KBM-7 (cell line): ENCODE measurements at regions of chr17 and their contacts with region 1.

Region 1: GRCh38 chr17:17500997-17501605 is 4.9 kb upstream of the RASD1 start:
- DNase-seq: no peak

Region 2: DNA sequence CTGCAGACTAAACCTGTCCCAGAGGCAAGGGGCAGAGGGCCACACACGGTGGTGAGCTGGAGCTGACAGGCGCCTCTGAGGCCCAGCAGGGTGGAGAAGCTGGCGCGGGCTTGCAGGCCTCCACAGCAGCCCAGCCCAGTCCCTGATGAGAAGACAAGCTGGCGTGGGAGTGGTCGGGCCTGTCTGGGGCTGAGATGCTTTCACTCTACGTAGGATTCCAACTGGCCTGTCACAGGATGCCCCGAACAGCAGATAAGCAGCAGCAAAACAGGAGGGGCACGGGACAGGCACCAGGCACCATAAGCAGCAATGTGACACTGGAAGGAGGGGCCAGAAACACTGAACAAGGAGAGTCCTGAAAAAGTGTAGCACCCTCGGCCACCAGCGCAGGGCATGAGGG is 50.3 kb after region 1 on chr17:
- in situ Hi-C with region 1: loop called (anchors 10 kb)
- DNase-seq: no peak

Region 3: DNA sequence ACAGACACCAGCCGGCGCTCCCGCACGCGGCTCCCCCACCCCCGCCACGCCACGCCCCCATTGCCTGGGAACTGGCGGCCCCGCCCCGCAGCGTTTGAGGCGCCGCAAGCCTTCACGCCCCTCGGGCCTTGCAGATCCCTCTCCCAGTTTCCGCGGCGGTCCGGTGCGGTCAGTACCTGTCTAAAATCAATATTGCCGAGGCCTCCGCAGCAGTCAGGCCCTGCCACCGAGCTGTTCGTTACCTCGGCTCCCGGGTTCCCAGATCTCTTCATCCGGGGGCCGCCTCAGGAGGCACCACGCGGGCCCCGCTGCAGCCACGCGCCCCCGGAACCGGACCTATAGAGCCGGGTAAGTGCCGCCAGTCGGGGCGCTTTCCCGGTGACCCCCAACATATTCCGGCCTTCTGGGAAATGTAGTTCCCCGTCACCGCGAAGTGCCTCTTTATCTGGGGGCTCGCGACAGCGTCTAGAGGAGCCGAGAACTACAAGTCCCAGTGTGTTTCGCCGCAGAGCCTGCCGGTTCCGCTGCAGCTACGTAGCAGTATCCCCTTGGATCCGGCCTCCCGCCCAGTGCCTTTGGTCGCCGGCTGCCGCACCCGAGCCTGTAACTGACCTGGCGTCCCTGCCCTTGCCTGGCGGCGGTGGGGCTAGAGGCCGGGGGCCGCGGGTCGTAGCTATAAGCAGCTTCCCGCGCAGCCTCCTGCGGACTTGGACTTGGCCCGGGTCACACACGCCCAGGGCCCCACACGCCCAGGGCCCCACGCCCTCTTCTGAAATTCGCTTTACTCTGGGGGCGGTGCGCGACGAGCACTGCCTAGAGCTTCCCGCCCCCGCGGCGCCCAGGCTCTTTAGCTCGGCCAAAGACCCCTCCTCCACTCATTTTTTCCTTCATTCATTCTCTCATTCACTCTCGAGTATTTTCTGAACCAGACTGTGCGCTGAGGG is 90.5 kb after region 1 on chr17 and contains the start of gene PEMT:
- in situ Hi-C with region 1: no loop called
- DNase-seq: peak; percentile 99